ENCODE measurements at regions of chr7 and their contacts with region 1.

Region 1: DNA sequence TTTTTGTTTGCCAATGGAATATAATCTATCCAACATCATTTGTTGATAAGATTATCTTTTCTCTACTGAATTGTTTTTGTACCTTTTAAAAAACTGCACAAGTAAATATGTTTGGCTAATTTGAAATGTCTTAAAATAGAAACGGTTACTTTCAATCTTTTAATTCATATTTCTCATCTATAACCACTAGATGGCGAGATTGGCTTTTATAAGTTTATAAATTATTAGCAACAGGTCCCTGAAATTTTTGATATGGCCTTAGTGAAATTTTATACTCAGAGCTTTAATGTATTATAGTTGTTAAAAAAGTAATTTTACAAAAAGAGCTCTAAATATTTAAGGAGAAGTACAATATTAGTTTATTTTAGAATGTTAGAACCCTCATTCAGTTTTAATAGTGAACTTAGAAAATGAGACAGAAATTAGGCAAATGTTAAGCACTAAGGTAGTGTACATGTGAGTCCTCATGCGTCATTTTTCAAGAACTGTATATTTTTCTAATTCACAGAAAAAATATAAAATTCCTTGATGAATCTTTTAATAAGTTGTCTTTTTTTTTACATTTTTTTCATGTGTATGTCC is 592.5 kb downstream of the ARL4A start:
- DNase-seq: no peak
- H3K4me3 ChIP-seq: no peak overlapping the region
- H3K27ac ChIP-seq: no peak overlapping the region
- H3K4me1 ChIP-seq: no peaks in the 10 kb centered on the region
- H3K27me3 ChIP-seq: no peaks in the 10 kb centered on the region
- CTCF ChIP-seq: peak in 2 of 3 experiments; percentile 13 to 14

Region 2: DNA sequence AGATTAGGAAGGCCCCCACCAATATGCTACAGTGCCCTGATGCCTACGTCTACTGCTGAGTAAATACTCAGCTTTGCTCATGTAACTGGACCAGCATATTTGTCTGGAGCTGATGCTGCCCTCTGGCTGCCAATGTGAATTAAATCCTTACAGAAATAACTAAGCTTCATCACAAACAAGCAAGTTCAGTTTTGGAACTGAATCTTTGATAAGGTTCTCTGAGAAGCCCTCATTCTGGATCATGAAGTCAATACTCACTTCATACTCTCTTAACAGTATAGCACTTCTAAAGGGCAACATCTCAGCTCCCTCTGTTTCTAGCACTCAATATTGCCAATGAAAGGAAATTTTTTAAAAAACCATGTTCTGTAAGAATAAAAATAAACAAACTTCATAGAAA is 462.9 kb after region 1 on chr7:
- dilution Hi-C with region 1: loop called (anchors 25 kb)
- DNase-seq: no peak
- H3K4me3 ChIP-seq: no peak overlapping the region
- H3K27ac ChIP-seq: no peak overlapping the region
- H3K4me1 ChIP-seq: no peaks in the 10 kb centered on the region
- H3K27me3 ChIP-seq: no peaks in the 10 kb centered on the region
- CTCF ChIP-seq: peak; percentile 45 to 68 (median 49)